OCI-LY7 (cell line): ENCODE measurements at regions of chr15 and their contacts with region 1.

Region 1: DNA sequence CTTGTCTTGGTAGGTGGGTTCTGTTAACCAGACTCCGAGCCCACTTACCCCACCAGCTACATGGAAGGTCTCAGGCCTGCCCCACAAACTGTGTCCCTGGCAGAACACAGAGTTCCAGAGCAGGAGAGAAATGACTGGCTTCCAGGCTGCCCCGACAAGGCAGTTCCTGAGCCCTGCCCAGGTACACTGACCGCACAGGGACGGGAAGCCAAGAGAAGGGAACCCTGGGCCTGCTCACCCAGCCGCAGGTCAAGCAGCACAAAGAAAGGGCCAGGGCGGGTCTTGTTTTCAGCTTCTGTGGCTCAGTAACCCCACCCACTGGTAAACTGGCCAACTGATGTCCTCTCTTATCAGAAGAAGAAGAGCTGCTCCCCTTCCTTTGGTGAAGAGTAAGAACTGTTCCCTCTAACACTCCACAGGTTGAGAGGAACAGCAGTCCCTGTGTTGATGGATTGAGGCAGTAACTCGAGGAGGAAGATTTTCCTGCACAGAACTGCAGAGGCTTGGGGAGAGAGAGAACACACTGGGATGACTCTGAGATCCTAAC is 68.4 kb downstream of the CRTC3 start:
- DNase-seq: peak; percentile 57
- H3K4me3 ChIP-seq: peak overlapping the region; percentile 27
- H3K27ac ChIP-seq: peak overlapping the region; percentile 91
- H3K4me1 ChIP-seq: peaks cover 56% of the 10 kb centered on the region
- CTCF ChIP-seq: peak; percentile 51; the same call in 1 of the 2 replicates

Region 2: GRCh38 chr15:90512981-90513380 is 85.1 kb before region 1 on chr15:
- CTCF ChIA-PET with region 1: no interaction called
- POLR2A ChIA-PET with region 1: no interaction called
- intact Hi-C with region 1: loop called (anchors 5 kb)
- DNase-seq: no peak
- H3K4me3 ChIP-seq: no peak overlapping the region
- H3K27ac ChIP-seq: no peak overlapping the region
- H3K4me1 ChIP-seq: no peaks in the 10 kb centered on the region
- CTCF ChIP-seq: no peak

Region 3: GRCh38 chr15:90529371-90530249 is 68.5 kb before region 1 on chr15 and contains the start of gene CRTC3:
- CTCF ChIA-PET with region 1: no interaction called
- POLR2A ChIA-PET with region 1: no interaction called
- intact Hi-C with region 1: loop called (anchors 5 kb)
- DNase-seq: peak; percentile 70
- H3K4me3 ChIP-seq: peak within 1 kb of the TSS; percentile 68
- H3K27ac ChIP-seq: no peak within 1 kb of the TSS
- H3K4me1 ChIP-seq: peaks cover 6% of the 10 kb centered on the region
- CTCF ChIP-seq: no peak
- total RNA-seq, gene CRTC3: 5.6 and 8.9 TPM in 2 replicates

Region 4: DNA sequence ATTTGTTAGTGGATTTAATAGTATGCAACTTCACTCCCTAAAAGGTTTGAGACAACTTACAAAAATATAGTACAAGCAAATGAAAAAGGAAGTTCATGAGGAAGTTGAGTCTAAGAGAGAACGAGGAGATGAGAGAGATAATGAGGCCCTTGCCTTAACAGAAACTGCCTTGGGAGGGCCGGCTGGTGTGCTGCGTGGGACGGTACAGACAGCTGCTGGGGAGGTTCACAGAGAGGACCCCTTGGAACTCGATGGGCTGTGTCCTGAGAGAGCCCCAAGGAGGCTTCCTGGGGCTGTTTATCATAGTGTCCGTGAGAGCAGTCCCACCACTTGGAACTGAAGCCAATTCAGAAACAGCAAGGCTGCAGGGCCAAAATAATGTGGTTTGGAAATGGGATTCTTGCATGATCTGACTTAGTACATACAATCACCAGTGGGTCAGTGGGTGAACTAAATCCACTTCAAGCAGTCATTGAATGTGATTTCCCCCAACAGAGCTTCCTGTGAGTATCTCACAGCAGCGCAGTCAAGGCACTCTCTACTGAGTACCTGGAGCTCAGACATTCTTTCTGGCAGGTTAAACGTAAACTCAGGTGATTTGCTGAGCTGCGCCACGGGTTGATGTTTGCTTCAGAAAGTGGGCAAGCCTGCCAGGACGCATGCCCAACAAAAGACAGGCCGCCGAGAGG is 22.4 kb after region 1 on chr15:
- CTCF ChIA-PET with region 1: no interaction called
- POLR2A ChIA-PET with region 1: no interaction called
- intact Hi-C with region 1: no loop called
- DNase-seq: peak; percentile 72
- H3K4me3 ChIP-seq: no peak overlapping the region
- H3K27ac ChIP-seq: no peak overlapping the region
- H3K4me1 ChIP-seq: peaks cover 14% of the 10 kb centered on the region
- CTCF ChIP-seq: no peak